ENCODE measurements at regions of chr2 and their contacts with region 1.

Region 1: GRCh38 chr2:74178201-74179062 is at the start of gene MOB1A:
- DNase-seq: peak; percentile 98
- ATAC-seq: peak; percentile 86
- H3K4me3 Mint-ChIP-seq: peak within 1 kb of the TSS; percentile 91
- H3K27ac Mint-ChIP-seq: peak within 1 kb of the TSS; percentile 92
- H3K4me1 Mint-ChIP-seq: peaks cover 31% of the 10 kb centered on the region
- H3K27me3 Mint-ChIP-seq: no peaks in the 10 kb centered on the region
- total RNA-seq, gene MOB1A: 178 TPM

Region 2: GRCh38 chr2:73828818-73829570 is 349.4 kb before region 1 on chr2 and contains the start of gene STAMBP:
- POLR2A ChIA-PET with region 1: interaction called, 20 read pairs
- DNase-seq: peak; percentile 87
- ATAC-seq: peak; percentile 92
- H3K4me3 Mint-ChIP-seq: peak within 1 kb of the TSS; percentile 98
- H3K27ac Mint-ChIP-seq: peak within 1 kb of the TSS; percentile 98
- H3K4me1 Mint-ChIP-seq: peaks cover 40% of the 10 kb centered on the region
- H3K27me3 Mint-ChIP-seq: peaks cover 2% of the 10 kb centered on the region
- total RNA-seq, gene STAMBP: 38.9 to 42.1 TPM

Region 3: DNA sequence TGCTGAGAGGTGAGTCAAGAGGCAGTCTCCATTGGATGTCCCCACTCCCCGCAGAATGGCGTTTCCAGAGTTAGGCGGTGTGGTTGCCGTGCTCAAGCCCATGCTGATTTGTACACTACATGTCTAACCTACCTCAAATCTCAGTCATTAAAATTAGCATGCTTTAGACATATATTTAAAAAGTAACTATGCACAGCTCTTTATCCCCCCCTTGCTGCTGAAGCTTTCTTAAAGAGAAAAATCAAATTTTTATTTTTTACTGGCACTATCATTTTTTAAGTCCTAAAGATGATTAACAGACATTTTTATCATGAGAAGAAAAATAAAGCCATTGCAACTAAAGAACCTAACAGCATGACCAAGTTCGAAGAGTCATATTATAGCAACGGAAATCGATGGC is 73.6 kb before region 1 on chr2:
- POLR2A ChIA-PET with region 1: no interaction called
- DNase-seq: no peak
- ATAC-seq: no peak
- H3K4me3 Mint-ChIP-seq: no peak overlapping the region
- H3K27ac Mint-ChIP-seq: no peak overlapping the region
- H3K4me1 Mint-ChIP-seq: no peaks in the 10 kb centered on the region
- H3K27me3 Mint-ChIP-seq: no peaks in the 10 kb centered on the region

Region 4: GRCh38 chr2:74119912-74120825 is 58.3 kb before region 1 on chr2:
- POLR2A ChIA-PET with region 1: interaction called, 13 read pairs
- DNase-seq: peak; percentile 92
- ATAC-seq: peak; percentile 97
- H3K4me3 Mint-ChIP-seq: peak overlapping the region; percentile 86
- H3K27ac Mint-ChIP-seq: peak overlapping the region; percentile 86
- H3K4me1 Mint-ChIP-seq: peaks cover 8% of the 10 kb centered on the region
- H3K27me3 Mint-ChIP-seq: peaks cover 3% of the 10 kb centered on the region

Region 5: GRCh38 chr2:74162951-74163350 is 15.5 kb before region 1 on chr2:
- POLR2A ChIA-PET with region 1: interaction called, 17 read pairs
- DNase-seq: no peak
- ATAC-seq: no peak
- H3K4me3 Mint-ChIP-seq: no peak overlapping the region
- H3K27ac Mint-ChIP-seq: no peak overlapping the region
- H3K4me1 Mint-ChIP-seq: no peaks in the 10 kb centered on the region
- H3K27me3 Mint-ChIP-seq: no peaks in the 10 kb centered on the region

Region 6: DNA sequence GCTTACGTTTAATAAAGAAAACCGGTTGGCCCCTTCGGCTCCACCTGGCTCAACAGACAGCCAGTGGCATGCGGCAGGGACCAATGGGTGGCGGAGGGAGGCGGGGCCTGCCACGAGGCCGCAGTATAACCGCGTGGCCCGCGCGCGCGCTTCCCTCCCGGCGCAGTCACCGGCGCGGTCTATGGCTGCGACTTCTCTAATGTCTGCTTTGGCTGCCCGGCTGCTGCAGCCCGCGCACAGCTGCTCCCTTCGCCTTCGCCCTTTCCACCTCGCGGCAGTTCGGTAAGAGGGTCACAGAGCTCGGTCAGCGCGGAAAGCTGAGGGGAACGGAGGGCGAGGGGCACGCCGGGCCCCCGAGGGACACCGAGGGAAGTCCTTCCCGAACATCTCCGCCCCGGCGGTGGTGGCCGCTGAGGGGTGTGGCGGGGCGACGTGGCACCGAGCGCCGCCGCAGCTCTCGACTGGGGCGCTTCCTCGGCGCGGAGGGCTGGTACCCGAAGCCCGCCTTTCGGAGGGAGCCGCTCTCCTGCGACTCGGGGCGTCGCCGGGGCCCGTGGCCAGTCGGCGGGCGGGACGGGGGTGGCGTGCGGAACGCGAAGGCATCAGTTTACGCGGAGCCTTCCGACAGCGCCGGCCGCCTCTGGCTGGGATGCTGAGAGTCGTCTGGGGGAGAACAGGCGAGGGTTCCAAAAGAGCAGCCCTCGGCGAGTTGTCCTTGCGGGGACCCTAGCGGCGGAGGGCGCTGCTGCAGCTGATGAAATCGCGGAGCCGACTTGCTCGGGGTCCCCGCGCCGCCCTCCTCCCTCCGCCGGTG is 20.2 kb after region 1 on chr2 and contains the start of gene MTHFD2:
- POLR2A ChIA-PET with region 1: interaction called, 276 read pairs
- DNase-seq: peak; percentile 94
- ATAC-seq: peak; percentile 89
- H3K4me3 Mint-ChIP-seq: peak within 1 kb of the TSS; percentile 99
- H3K27ac Mint-ChIP-seq: peak within 1 kb of the TSS; percentile 100
- H3K4me1 Mint-ChIP-seq: peaks cover 37% of the 10 kb centered on the region
- H3K27me3 Mint-ChIP-seq: no peaks in the 10 kb centered on the region
- total RNA-seq, gene MTHFD2: 127 to 130 TPM

Region 7: GRCh38 chr2:74221604-74222299 is 43.3 kb after region 1 on chr2:
- POLR2A ChIA-PET with region 1: no interaction called
- DNase-seq: no peak
- ATAC-seq: no peak
- H3K4me3 Mint-ChIP-seq: no peak overlapping the region
- H3K27ac Mint-ChIP-seq: no peak overlapping the region
- H3K4me1 Mint-ChIP-seq: peaks cover 11% of the 10 kb centered on the region
- H3K27me3 Mint-ChIP-seq: no peaks in the 10 kb centered on the region

Region 8: DNA sequence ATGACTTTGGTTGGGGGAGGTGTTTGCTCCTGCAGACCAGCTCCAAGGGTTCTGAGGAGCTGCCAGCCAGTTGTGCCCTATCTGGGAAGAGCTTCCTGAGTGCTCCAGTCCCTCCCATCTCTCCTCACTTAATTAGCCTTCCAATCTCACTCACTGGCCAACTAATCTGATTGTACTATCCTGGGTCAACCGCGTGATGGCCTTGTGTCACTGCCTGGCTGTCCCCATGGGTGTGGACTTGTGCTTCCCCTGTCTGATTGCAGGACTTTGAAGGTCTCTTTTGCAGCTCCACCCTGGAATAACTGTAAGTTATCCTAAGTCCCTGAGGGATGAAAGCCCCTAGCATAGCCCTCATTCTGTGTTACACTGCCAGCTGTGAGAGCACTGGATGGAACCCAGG is 99.7 kb after region 1 on chr2:
- POLR2A ChIA-PET with region 1: no interaction called
- DNase-seq: no peak
- ATAC-seq: no peak
- H3K4me3 Mint-ChIP-seq: no peak overlapping the region
- H3K27ac Mint-ChIP-seq: no peak overlapping the region
- H3K4me1 Mint-ChIP-seq: no peaks in the 10 kb centered on the region
- H3K27me3 Mint-ChIP-seq: peaks cover 3% of the 10 kb centered on the region

Measured in activated naive CD8-positive, alpha-beta T cell treated with anti-CD3 and anti-CD28 coated beads, Interleukin-2, amount 10 ng/mL, durations not matched to agents 7 days and 5 days (primary cell).